H1 (cell line): ENCODE measurements at regions of chr1 and their contacts with region 1.

Region 1: GRCh38 chr1:17405898-17406759 is 33.3 kb downstream of the RCC2 start:
- DNase-seq: peak; percentile 50 to 89
- H3K4me3 ChIP-seq: no peak overlapping the region
- H3K27ac ChIP-seq: no peak overlapping the region
- H3K4me1 ChIP-seq: peaks cover 0 to 10% (median 6%) of the 10 kb centered on the region in 4 experiments; a peak in 4 of 7 replicates
- H3K27me3 ChIP-seq: no peaks in the 10 kb centered on the region
- CTCF ChIP-seq: peak; percentile 90 to 98 (median 92)
- EP300 ChIP-seq: no peak
- POLR2A ChIP-seq: peak in 1 of 2 experiments; percentile 50
- RAD21 ChIP-seq: peak; percentile 82 to 83

Region 2: DNA sequence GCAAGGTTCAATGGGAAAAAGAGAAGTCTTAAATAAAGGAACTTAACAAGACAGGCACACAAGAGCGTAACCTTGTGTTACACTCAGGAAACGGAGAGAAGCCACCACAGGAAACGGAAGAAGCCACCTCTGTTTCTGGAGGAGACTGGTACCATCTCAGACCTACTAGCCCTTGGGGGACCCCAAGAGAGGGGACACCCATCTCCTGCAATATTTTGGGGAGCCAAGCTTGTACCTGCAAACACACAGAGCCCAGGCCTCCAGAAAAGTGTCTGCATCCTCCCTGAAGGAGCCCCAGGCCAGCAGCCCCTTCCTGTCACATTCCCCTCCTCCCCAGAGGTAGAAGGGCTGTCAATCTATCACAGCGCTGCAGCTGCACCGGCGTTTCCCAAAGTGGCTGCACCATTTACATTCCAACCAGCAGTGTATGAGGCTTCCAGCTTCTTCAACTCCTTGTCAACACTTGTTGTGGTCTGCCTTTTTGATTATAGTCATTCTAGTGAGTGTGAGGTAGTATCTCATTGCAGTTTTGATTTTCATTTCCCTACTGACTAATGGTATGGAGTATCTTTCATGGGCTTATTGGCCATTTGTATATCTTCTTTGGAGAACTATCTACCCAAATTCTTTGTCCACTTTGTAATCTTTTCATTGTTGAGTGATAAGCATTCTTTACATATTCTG is 224.2 kb before region 1 on chr1:
- CTCF ChIA-PET with region 1: no interaction called
- POLR2A ChIA-PET with region 1: no interaction called
- DNase-seq: peak in 1 of 2 experiments; percentile 46
- H3K4me3 ChIP-seq: no peak overlapping the region
- H3K27ac ChIP-seq: no peak overlapping the region
- H3K4me1 ChIP-seq: peaks cover 0 to 3% (median under 1%) of the 10 kb centered on the region in 4 experiments; a peak in 2 of 7 replicates
- H3K27me3 ChIP-seq: no peaks in the 10 kb centered on the region
- CTCF ChIP-seq: no peak
- EP300 ChIP-seq: no peak
- POLR2A ChIP-seq: no peak
- RAD21 ChIP-seq: no peak

Region 3: GRCh38 chr1:17195731-17196130 is 210.4 kb before region 1 on chr1:
- CTCF ChIA-PET with region 1: no interaction called
- POLR2A ChIA-PET with region 1: no interaction called
- DNase-seq: peak in 1 of 2 experiments; percentile 39
- H3K4me3 ChIP-seq: no peak overlapping the region
- H3K27ac ChIP-seq: no peak overlapping the region
- H3K4me1 ChIP-seq: no peaks in the 10 kb centered on the region; a peak in 1 of 7 replicates
- H3K27me3 ChIP-seq: no peaks in the 10 kb centered on the region
- CTCF ChIP-seq: no peak
- EP300 ChIP-seq: no peak
- POLR2A ChIP-seq: no peak
- RAD21 ChIP-seq: no peak

Region 4: GRCh38 chr1:17229383-17229782 is 176.7 kb before region 1 on chr1:
- CTCF ChIA-PET with region 1: no interaction called
- POLR2A ChIA-PET with region 1: no interaction called
- DNase-seq: no peak
- H3K4me3 ChIP-seq: no peak overlapping the region
- H3K27ac ChIP-seq: no peak overlapping the region
- H3K4me1 ChIP-seq: no peaks in the 10 kb centered on the region
- H3K27me3 ChIP-seq: no peaks in the 10 kb centered on the region; a peak in 1 of 7 replicates
- CTCF ChIP-seq: no peak
- EP300 ChIP-seq: no peak
- POLR2A ChIP-seq: no peak
- RAD21 ChIP-seq: no peak

Region 5: DNA sequence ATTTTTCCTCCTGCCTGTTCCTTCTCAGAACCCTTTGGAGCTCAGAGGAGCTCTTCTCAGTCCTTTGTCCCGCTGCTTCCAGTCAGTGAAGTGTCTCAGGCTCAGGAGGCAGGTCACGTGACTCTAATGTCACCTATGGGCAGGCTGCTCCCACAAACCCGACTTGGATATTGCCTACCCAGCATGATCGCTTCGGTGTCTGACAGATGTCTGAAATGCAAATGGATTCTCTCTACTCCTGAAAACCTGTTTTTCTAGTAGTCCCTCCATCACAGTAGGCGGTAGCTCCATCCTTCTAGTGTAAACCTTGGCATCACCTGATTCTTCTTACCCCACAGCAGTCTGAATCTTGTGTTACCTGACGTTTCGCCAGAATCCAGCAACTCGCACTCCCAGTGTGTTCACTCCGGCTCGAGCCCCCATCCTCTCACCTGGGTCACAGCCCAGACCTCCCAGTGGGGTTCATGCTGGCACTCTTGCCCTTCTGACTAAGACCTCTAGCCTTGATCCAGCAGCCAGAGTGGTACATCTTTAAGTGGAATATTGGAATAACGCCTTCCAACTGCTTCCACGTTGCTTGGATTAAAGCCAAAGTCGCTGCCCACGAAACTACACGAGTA is 28.7 kb before region 1 on chr1:
- CTCF ChIA-PET with region 1: interaction called, 19 read pairs
- POLR2A ChIA-PET with region 1: interaction called, 13 read pairs
- DNase-seq: no peak
- H3K4me3 ChIP-seq: peak overlapping the region in 1 of 4 experiments; percentile 7; a peak in 3 of 8 replicates
- H3K27ac ChIP-seq: no peak overlapping the region
- H3K4me1 ChIP-seq: peaks cover 5 to 12% (median 10%) of the 10 kb centered on the region in 4 experiments; a peak in 6 of 7 replicates
- H3K27me3 ChIP-seq: no peaks in the 10 kb centered on the region; a peak in 1 of 7 replicates
- CTCF ChIP-seq: no peak
- EP300 ChIP-seq: peak in 1 of 2 experiments; percentile 38; a peak in 1 of 3 replicates
- POLR2A ChIP-seq: no peak
- RAD21 ChIP-seq: no peak

Region 6: GRCh38 chr1:17393230-17393629 is 12.9 kb before region 1 on chr1:
- CTCF ChIA-PET with region 1: interaction called, 21 read pairs
- POLR2A ChIA-PET with region 1: interaction called, 24 read pairs
- DNase-seq: no peak
- H3K4me3 ChIP-seq: no peak overlapping the region
- H3K27ac ChIP-seq: no peak overlapping the region
- H3K4me1 ChIP-seq: no peaks in the 10 kb centered on the region
- H3K27me3 ChIP-seq: no peaks in the 10 kb centered on the region; a peak in 1 of 7 replicates
- CTCF ChIP-seq: no peak
- EP300 ChIP-seq: no peak
- POLR2A ChIP-seq: no peak
- RAD21 ChIP-seq: no peak

Region 7: DNA sequence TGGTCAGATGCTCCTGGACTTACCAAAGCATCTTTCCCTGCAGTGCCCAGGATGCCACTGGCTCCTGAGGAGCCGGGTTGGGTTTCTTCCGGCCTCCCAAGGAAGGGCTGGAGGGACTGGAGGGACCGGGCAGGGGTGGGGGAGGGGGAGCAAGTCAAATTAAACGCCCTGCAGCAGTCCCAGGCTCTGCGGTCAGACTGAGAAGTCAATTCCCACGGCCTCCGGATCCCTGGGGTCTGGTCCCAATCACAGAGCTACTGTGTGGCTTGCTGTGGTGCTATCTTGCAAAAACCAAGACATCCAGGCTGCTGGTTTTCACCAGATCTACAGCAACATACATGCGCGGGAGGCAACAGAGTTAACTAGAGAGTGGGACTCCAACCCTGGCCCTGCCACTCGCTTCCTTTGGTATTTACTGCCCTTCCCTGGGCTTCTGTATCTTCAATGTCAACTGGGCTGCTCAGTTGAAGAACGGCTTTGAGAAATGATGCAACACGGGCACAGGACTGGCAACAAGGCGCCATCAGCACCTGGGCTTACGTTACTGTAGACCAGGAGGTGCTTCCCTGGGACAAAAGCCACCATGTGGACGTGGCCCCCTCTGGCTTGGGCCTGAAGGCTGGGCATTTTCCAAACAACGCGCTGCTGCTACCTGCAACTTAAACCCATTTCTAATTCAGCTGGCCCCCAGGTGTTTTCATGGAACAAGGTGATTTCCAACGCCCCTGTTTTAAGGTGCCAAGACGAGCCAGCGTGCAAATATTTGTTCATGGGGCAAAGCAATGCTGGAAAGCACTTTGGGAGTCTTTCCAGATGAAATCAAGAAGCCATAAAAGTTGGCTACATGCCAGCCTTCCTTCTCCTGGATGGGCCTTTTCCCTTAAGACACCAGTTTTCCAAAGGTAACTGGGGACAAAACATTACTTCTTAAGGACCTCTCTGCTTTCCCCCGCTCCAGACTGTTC is 21.8 kb after region 1 on chr1:
- CTCF ChIA-PET with region 1: interaction called, 7 read pairs
- POLR2A ChIA-PET with region 1: interaction called, 116 read pairs
- DNase-seq: no peak
- H3K4me3 ChIP-seq: no peak overlapping the region
- H3K27ac ChIP-seq: 0 out of 2 replicates have a peak overlapping the region, but pooled peaks have one; percentile 29
- H3K4me1 ChIP-seq: peaks cover 2 to 21% (median 15%) of the 10 kb centered on the region in 4 experiments
- H3K27me3 ChIP-seq: no peaks in the 10 kb centered on the region
- CTCF ChIP-seq: no peak
- EP300 ChIP-seq: no peak
- POLR2A ChIP-seq: peak; percentile 15 to 45; a peak in 1 of 3 replicates
- RAD21 ChIP-seq: no peak